Testis (tissue), 5 donors: ENCODE measurements at regions of chr6 and their contacts with region 1.

Region 1: GRCh38 chr6:44237813-44238433 is 9.0 kb upstream of the HSP90AB1 start:
- DNase-seq: peak; percentile 85
- H3K4me3 ChIP-seq: peak overlapping the region; percentile 67 to 68
- H3K27ac ChIP-seq: peak overlapping the region; percentile 94 to 98
- H3K4me1 ChIP-seq: peaks cover 30% of the 10 kb centered on the region
- H3K27me3 ChIP-seq: no peaks in the 10 kb centered on the region
- CTCF ChIP-seq: peak; percentile 99 to 100 (median 99)
- POLR2A ChIP-seq: no peak

Region 2: GRCh38 chr6:44100088-44100550 is 137.8 kb before region 1 on chr6:
- intact Hi-C with region 1: no loop called
- DNase-seq: peak; percentile 56
- H3K4me3 ChIP-seq: no peak overlapping the region
- H3K27ac ChIP-seq: no peak overlapping the region
- H3K4me1 ChIP-seq: peaks cover 6% of the 10 kb centered on the region
- H3K27me3 ChIP-seq: no peaks in the 10 kb centered on the region
- CTCF ChIP-seq: peak; percentile 34 to 37 (median 37)
- POLR2A ChIP-seq: no peak

Region 3: GRCh38 chr6:44172731-44173500 is 65.0 kb before region 1 on chr6:
- intact Hi-C with region 1: loop called (anchors 10 kb)
- DNase-seq: peak; percentile 91
- H3K4me3 ChIP-seq: no peak overlapping the region
- H3K27ac ChIP-seq: no peak overlapping the region
- H3K4me1 ChIP-seq: no peaks in the 10 kb centered on the region
- H3K27me3 ChIP-seq: no peaks in the 10 kb centered on the region
- CTCF ChIP-seq: peak; percentile 81 to 89 (median 83)
- POLR2A ChIP-seq: no peak

Region 4: GRCh38 chr6:44285552-44286284 is 47.8 kb after region 1 on chr6:
- intact Hi-C with region 1: no loop called
- DNase-seq: no peak
- H3K4me3 ChIP-seq: peak overlapping the region in 1 of 2 donors; percentile 11
- H3K27ac ChIP-seq: no peak overlapping the region
- H3K4me1 ChIP-seq: no peaks in the 10 kb centered on the region
- H3K27me3 ChIP-seq: no peaks in the 10 kb centered on the region
- CTCF ChIP-seq: no peak
- POLR2A ChIP-seq: no peak